ENCODE measurements at regions of chr7 and their contacts with region 1.

Region 1: DNA sequence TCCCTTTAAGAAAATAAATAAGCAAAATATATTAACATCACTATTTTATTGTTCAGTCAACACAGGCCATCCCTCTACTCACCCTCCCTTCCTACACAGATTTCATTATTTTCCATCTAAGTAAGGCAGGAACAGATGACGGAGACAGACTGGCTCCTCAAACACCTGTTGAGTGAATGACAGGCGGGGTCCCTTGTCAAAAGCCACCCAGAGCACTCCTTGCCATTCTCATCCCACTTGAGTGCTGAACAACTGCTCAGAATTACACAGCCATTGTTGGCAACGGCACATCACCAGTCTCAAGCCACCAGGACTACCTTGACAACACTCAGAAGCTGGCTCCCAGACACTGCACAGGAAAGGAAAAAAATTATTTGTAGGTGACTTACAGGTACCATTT is 3.3 kb downstream of the GRB10 start:
- DNase-seq: no peak
- ATAC-seq: no peak
- H3K4me3 ChIP-seq: no peak overlapping the region
- H3K27ac ChIP-seq: no peak overlapping the region
- H3K4me1 ChIP-seq: peaks cover 2 to 29% of the 10 kb centered on the region in 2 experiments; a peak in 3 of 5 replicates
- H3K27me3 ChIP-seq: no peaks in the 10 kb centered on the region
- CTCF ChIP-seq: no peak
- EP300 ChIP-seq: no peak
- POLR2A ChIP-seq: no peak
- RAD21 ChIP-seq: no peak

Region 2: GRCh38 chr7:50711257-50712175 is 67.9 kb before region 1 on chr7:
- CTCF ChIA-PET with region 1: no interaction called
- POLR2A ChIA-PET with region 1: no interaction called
- in situ Hi-C with region 1: no loop called
- intact Hi-C with region 1: no loop called
- DNase-seq: no peak
- ATAC-seq: no peak; the same call in 2 of the 3 replicates
- H3K4me3 ChIP-seq: no peak overlapping the region
- H3K27ac ChIP-seq: no peak overlapping the region
- H3K4me1 ChIP-seq: peaks cover 0 to 11% of the 10 kb centered on the region in 2 experiments; a peak in 2 of 5 replicates
- H3K27me3 ChIP-seq: no peaks in the 10 kb centered on the region
- CTCF ChIP-seq: no peak
- EP300 ChIP-seq: no peak
- POLR2A ChIP-seq: no peak
- RAD21 ChIP-seq: no peak

Region 3: DNA sequence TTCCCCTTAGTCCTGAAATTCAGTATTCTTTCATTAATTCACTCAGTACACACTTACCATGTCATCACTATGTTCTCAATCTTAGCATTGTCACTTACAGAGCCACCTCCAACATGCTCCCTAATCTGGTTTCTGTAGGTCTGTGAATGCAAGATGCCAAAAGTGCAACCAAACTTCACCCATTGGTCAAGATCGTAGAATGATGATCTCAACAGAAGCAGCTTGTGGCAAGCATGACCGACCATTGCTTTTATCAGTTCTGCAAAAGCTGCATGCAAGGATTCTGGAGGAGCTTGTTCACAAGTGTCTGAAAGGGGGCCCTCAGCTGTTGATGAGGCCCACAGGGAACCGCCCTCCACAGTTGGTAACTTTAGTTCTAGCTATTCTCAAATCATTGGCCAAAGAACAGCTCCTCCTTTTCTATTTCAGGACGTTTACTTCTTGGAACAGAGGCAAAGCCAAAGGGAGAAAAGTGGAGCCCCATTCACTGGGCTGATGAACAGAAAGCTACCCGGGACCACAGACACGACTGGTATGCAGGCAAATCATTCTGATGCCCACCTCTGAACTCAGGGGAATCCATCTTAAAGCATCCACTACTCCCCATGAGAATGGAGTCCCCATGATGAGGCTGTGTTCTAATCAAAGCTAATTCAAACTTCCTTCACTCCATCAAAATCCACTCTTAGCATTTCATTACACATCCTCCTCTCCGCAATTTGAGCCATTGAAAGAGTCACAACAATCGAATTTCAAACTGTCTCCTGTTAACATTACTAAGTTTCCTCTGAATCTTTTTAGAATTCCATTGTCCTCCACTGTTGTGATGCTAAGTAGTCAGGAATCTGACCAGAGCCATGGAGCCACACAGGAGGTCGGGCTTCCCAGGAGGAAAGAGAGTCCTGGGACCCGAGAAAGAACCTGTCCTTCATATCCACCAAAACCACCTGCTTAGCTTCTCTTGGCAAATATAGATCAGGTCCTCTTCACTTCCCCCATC is 10.6 kb before region 1 on chr7:
- CTCF ChIA-PET with region 1: no interaction called
- POLR2A ChIA-PET with region 1: interaction called, 11 read pairs
- in situ Hi-C with region 1: no loop called
- intact Hi-C with region 1: no loop called
- DNase-seq: peak in 1 of 4 experiments; percentile 30
- ATAC-seq: peak; percentile 18
- H3K4me3 ChIP-seq: no peak overlapping the region
- H3K27ac ChIP-seq: no peak overlapping the region
- H3K4me1 ChIP-seq: peaks cover 0 to 14% of the 10 kb centered on the region in 2 experiments; a peak in 3 of 5 replicates
- H3K27me3 ChIP-seq: no peaks in the 10 kb centered on the region
- CTCF ChIP-seq: no peak
- EP300 ChIP-seq: no peak
- POLR2A ChIP-seq: no peak
- RAD21 ChIP-seq: no peak

Region 4: DNA sequence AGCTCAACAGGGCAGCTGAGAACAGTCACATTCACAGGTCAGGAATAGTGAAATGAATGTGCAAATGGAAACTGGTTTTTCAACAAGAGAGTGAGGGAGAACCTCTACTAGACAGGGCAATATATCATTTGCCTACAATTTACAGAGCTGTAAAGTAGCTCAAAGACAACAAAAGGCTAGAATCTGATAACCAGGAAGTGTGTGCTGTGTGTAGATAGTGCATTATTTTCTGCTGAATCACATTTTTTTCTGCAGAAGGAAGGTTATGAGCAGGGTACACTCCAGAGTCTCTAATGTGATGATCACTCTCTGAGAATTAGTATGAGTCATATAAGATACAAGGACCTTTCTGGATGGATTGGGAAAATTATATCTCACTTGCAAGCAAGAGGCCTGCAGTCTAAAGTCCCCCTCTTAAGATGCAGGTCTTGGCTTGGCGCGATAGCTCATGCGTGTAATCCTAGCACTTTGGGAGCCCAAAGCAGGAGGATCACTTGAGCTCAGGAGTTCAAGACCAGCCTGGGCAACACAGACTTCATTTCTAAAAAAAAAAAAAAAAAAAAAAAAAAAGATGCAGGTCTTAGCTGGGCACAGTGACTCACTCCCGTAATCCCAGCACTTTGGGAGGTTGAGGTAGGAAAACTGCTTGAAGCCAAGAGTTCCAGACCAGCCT is 597.1 kb after region 1 on chr7:
- CTCF ChIA-PET with region 1: no interaction called
- POLR2A ChIA-PET with region 1: no interaction called
- in situ Hi-C with region 1: no loop called
- intact Hi-C with region 1: no loop called
- DNase-seq: peak; percentile 37 to 85 (median 52)
- ATAC-seq: peak; percentile 95
- H3K4me3 ChIP-seq: no peak overlapping the region
- H3K27ac ChIP-seq: peak overlapping the region; percentile 89
- H3K4me1 ChIP-seq: peaks cover 15 to 19% of the 10 kb centered on the region in 2 experiments; a peak in 3 of 5 replicates
- H3K27me3 ChIP-seq: no peaks in the 10 kb centered on the region
- CTCF ChIP-seq: no peak
- EP300 ChIP-seq: peak; percentile 95
- POLR2A ChIP-seq: no peak
- RAD21 ChIP-seq: no peak; a peak in 1 of 4 replicates